Ovary (tissue), 10 donors: ENCODE measurements at regions of chr9 and their contacts with region 1.

Region 1: DNA sequence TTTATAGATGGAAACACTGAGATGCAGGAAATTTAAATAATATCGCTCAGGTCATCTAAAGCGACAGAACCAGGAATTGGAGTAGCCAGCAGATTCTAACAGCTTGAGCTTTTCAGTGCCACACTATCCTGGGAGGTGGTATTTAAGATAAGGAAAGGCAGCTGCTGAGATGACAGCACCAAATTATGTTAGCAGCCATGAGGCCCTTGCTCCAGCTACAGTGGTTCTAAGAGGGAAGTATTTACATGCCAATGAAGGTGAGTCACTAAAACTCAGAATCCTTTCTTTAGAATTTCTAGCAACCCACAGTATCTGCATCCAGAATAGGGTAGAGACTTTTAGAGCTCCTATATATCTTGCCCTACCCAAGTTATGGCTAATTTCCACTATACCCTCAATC is 127.0 kb upstream of the VLDLR start:
- DNase-seq: no peak
- H3K4me3 ChIP-seq: no peak overlapping the region
- H3K27ac ChIP-seq: peak overlapping the region in 1 of 2 donors; percentile 82
- H3K4me1 ChIP-seq: peaks cover 18% of the 10 kb centered on the region
- H3K27me3 ChIP-seq: no peaks in the 10 kb centered on the region
- CTCF ChIP-seq: no peak
- EP300 ChIP-seq: no peak
- POLR2A ChIP-seq: no peak

Region 2: GRCh38 chr9:2727966-2728613 is 233.5 kb after region 1 on chr9:
- intact Hi-C with region 1: loop called in 1 of 4 experiments (anchors 10 kb)
- DNase-seq: peak in 4 of 5 donors; percentile 40 to 78 (median 48)
- H3K4me3 ChIP-seq: no peak overlapping the region
- H3K27ac ChIP-seq: peak overlapping the region in 1 of 2 donors; percentile 78
- H3K4me1 ChIP-seq: peaks cover 13% of the 10 kb centered on the region
- H3K27me3 ChIP-seq: no peaks in the 10 kb centered on the region
- CTCF ChIP-seq: peak; percentile 37 to 81 (median 79)
- EP300 ChIP-seq: no peak
- POLR2A ChIP-seq: no peak